PC-3 (cell line): ENCODE measurements at regions of chr14 and their contacts with region 1.

Region 1: DNA sequence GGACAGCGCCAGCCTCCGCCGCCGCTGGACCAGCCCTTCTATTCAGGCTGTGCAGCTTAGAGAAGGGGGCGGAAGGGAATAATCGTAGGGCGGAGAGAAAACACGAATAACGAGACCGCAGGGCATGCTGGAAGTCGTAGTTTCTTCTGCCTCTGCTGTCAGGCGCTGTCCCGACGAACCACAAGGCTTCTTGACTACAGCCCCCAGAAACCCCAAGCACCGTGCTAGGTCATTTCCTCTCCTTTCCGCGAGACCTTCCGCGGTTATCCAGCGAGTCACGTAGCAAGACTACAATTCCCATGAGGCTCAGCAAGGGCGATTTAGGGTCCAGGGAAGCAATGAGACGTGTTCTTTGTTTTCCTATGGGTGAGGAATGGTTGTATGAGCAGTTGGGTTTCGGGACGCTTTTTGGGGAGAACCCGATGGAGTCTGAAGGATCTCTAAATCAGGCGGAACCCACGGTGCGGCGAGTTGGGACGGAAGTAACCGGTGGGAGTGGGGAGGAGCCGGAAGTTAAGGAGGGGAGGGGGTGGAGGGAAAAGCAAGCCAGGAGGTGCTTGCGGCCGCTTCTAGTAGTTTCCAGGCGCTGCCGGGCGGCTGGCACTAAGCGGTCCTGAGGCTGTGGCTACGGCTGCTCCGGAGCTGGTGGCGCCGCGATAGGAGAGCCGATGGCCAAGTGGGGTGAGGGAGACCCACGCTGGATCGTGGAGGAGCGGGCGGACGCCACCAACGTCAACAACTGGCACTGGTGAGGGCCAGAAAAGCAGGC is at the starts of genes AHSA1 and VIPAS39:
- DNase-seq: peak; percentile 100
- ATAC-seq: peak; percentile 95
- H3K4me3 ChIP-seq: peak within 1 kb of the TSS; percentile 82
- H3K27ac ChIP-seq: peak within 1 kb of the TSS; percentile 50
- H3K4me1 ChIP-seq: peaks cover 19% of the 10 kb centered on the region
- H3K27me3 ChIP-seq: no peaks in the 10 kb centered on the region
- CTCF ChIP-seq: no peak
- total RNA-seq, gene AHSA1: 215 and 217 TPM in 2 replicates
- total RNA-seq, gene VIPAS39: 20.1 and 20.2 TPM in 2 replicates

Region 2: DNA sequence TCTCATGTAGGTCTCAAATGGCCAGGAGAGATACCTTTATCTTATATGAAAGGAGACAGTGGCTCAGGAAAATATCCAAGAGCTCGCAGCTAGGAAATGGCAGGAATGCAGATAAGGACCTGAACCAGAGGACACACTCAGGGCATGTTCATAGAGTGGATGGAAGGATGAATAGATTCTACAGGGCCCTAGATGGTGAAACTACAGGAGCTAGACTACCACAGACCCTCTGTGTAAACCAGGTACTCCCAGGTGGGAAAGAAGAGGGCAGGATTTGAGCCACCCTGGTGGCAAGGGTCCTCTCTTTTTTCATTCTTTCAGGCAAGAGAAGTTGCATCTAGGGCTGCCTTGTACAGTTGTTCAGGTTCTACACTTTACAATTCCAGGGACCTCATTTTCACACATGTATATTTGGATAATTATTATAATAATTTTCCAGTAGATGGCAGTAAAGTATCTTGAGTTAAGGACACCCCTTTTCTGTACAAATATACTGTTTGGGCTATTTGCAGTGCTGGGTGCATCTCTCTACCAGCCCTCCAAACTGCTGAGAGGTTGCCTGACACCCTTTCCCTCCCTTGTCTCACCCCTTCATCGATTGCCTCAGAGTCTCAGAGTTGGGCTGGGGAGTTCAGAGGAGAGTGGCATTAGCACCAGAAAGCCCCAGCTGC is 305.7 kb before region 1 on chr14:
- CTCF ChIA-PET with region 1: no interaction called
- POLR2A ChIA-PET with region 1: interaction called, 3 read pairs
- intact Hi-C with region 1: loop called (anchors 5 kb)
- DNase-seq: peak; percentile 82
- ATAC-seq: peak; percentile 79
- H3K4me3 ChIP-seq: no peak overlapping the region
- H3K27ac ChIP-seq: no peak overlapping the region
- H3K4me1 ChIP-seq: no peaks in the 10 kb centered on the region
- H3K27me3 ChIP-seq: peaks cover 8% of the 10 kb centered on the region
- CTCF ChIP-seq: peak; percentile 61

Region 3: DNA sequence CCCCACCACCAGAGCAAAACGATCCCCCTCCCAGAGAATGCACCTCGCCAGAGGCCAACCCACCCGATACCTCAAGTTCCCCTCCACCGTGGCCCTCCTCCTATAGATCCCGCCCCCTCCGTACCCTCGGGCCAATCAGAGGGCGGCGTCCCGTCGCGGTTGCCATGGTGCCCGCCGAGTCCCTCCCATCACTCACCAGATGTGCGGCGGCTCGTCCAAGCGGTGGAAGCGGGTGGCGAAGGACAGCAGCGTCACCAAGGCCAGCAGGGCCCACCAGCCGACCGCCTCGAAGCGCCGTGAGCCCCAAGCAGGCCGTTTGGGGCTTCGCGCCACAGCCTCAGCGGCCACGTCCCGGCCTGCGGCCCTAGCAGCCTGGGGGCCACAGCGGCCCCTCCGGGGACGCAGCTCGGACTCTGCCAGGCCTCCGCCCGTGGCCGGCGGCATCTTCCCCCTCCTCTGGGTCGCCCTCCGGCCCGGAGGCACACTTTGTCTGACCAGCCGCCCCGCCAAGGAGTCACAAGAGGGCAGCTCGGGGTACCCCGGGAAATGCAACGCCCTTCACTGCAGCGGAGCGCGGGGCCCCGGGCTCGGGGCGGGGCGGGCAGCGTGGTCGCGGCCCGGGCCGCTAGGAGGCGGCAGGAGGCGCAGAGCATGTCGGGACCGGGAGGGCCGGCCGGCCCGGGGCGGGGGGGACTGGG is 137.3 kb before region 1 on chr14 and contains the start of gene POMT2:
- CTCF ChIA-PET with region 1: interaction called, 3 read pairs
- POLR2A ChIA-PET with region 1: no interaction called
- intact Hi-C with region 1: loop called (anchors 1 kb)
- DNase-seq: peak; percentile 98
- ATAC-seq: peak; percentile 66
- H3K4me3 ChIP-seq: peak within 1 kb of the TSS; percentile 86
- H3K27ac ChIP-seq: peak within 1 kb of the TSS; percentile 88
- H3K4me1 ChIP-seq: peaks cover 42% of the 10 kb centered on the region
- H3K27me3 ChIP-seq: no peaks in the 10 kb centered on the region
- CTCF ChIP-seq: peak; percentile 52; the same call in 1 of the 2 replicates
- total RNA-seq, gene POMT2: 57.6 and 67.6 TPM in 2 replicates

Region 4: DNA sequence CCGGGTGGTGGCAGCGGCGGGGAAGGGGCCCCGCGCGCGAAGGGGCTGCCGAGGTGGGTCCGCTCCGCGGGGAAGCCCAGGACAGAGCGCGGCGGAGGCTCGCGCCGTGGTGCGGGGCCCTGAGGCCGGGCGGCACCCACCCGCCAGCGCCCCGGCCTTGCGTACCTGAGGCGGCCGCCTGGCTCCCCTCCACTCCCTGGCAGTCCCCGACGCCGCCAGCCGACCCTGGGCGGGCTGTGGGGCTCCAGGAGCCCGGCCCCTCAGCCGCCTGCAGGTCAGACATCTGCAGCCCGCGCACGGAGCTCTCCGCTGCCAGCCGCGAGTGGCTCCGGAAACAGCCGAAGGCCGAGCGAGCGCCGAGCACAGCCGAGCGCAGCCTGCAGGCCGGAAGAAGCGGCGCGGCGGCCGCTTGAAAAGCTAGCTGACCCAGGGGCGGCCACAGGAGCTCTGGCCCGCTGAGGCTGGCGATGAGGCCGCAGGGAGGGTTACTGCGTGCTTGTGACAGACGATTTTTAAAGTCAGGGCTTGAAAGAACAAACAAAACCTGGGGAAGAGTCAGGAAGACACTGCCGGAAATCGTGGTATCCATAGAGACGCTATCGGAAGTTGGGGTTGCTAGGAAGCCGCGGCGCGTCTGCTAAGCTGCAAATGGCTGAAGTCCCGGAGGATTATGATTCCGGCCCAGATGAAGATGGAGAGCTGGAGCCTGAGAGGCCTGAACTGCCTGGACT is 80.8 kb before region 1 on chr14 and contains the starts of genes SAMD15 and TMED8:
- CTCF ChIA-PET with region 1: interaction called, 3 read pairs
- POLR2A ChIA-PET with region 1: no interaction called
- intact Hi-C with region 1: loop called (anchors 1 kb)
- DNase-seq: peak; percentile 94
- ATAC-seq: peak; percentile 97
- H3K4me3 ChIP-seq: peak within 1 kb of the TSS; percentile 92
- H3K27ac ChIP-seq: peak within 1 kb of the TSS; percentile 51
- H3K4me1 ChIP-seq: peaks cover 27% of the 10 kb centered on the region
- H3K27me3 ChIP-seq: no peaks in the 10 kb centered on the region
- CTCF ChIP-seq: peak; percentile 37; the same call in 1 of the 2 replicates
- total RNA-seq, gene SAMD15: 1.2 and 6.2 TPM in 2 replicates
- total RNA-seq, gene TMED8: 16.8 and 17.8 TPM in 2 replicates

Region 5: GRCh38 chr14:77390188-77390587 is 67.5 kb before region 1 on chr14:
- CTCF ChIA-PET with region 1: no interaction called
- POLR2A ChIA-PET with region 1: no interaction called
- intact Hi-C with region 1: no loop called
- DNase-seq: no peak
- ATAC-seq: no peak
- H3K4me3 ChIP-seq: no peak overlapping the region
- H3K27ac ChIP-seq: no peak overlapping the region
- H3K4me1 ChIP-seq: no peaks in the 10 kb centered on the region
- H3K27me3 ChIP-seq: no peaks in the 10 kb centered on the region
- CTCF ChIP-seq: no peak

Region 6: DNA sequence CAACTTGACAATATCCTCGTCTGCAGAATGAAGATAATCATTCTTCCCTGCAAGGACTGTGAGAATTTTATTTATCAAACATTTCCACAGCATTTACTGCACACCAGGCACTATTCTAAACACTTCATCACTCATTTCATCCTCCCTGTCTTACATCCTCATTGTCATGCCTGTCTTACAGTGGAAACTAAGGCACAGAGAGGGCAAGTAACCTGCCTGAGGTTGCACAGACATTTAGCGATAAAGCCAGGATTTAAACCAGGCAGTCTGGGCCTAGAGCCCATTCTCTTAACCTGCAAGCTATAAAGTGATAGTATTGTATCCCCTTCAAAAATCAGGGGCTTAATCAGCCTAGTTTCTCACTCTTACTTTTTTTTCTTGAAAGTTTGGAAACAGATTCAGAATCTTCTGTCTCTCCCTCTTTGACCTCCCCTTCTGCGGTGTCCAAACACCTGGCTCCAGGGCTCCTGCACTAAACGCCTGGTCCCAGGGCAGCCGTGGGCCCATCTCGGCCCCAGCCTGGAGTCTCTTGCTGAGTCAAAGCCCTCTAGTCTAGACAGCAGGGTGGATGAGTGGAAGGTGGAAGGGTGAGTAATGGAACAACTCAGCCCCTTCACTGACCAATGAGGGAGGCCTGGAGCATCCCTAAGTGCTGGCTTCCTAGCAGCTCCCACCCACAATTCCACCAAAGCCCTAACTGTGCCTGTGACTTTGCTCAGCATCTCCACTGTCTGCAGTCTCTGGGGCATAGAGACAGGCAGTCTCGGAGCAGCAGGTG is 28.4 kb after region 1 on chr14:
- CTCF ChIA-PET with region 1: no interaction called
- POLR2A ChIA-PET with region 1: no interaction called
- intact Hi-C with region 1: no loop called
- DNase-seq: peak; percentile 46
- ATAC-seq: peak; percentile 65
- H3K4me3 ChIP-seq: no peak overlapping the region
- H3K27ac ChIP-seq: no peak overlapping the region
- H3K4me1 ChIP-seq: no peaks in the 10 kb centered on the region
- H3K27me3 ChIP-seq: no peaks in the 10 kb centered on the region
- CTCF ChIP-seq: no peak

Region 7: DNA sequence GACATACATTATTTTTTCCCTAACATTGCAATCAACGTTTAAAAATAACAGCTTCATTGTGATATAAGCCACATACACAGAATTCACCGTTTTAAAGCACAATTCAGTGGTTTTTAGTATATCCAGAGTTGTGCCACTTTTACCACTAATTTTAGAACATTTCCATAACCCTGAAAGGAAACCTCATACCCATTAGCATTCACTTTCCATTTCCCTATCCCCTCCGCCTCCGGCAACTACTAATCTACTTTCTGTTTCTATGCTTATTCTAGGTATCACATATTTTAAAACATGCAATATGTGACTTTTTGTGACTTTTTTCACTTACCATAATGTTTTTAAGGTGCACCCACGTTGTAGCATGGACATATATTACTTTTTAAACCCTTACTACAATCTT is 96.5 kb after region 1 on chr14:
- CTCF ChIA-PET with region 1: interaction called, 5 read pairs
- POLR2A ChIA-PET with region 1: no interaction called
- intact Hi-C with region 1: loop called (anchors 1 kb)
- DNase-seq: no peak
- ATAC-seq: no peak
- H3K4me3 ChIP-seq: no peak overlapping the region
- H3K27ac ChIP-seq: no peak overlapping the region
- H3K4me1 ChIP-seq: no peaks in the 10 kb centered on the region
- H3K27me3 ChIP-seq: no peaks in the 10 kb centered on the region
- CTCF ChIP-seq: no peak

Region 8: GRCh38 chr14:77616454-77617229 is 158.9 kb after region 1 on chr14 and contains the start of gene SPTLC2:
- CTCF ChIA-PET with region 1: no interaction called
- POLR2A ChIA-PET with region 1: no interaction called
- intact Hi-C with region 1: loop called (anchors 5 kb)
- DNase-seq: peak; percentile 99
- ATAC-seq: peak; percentile 94
- H3K4me3 ChIP-seq: peak within 1 kb of the TSS; percentile 97
- H3K27ac ChIP-seq: peak within 1 kb of the TSS; percentile 45
- H3K4me1 ChIP-seq: peaks cover 28% of the 10 kb centered on the region
- H3K27me3 ChIP-seq: no peaks in the 10 kb centered on the region
- CTCF ChIP-seq: peak; percentile 42; the same call in 1 of the 2 replicates
- total RNA-seq, gene SPTLC2: 25.6 and 27.6 TPM in 2 replicates

Region 9: GRCh38 chr14:77707724-77708408 is 250.2 kb after region 1 on chr14 and contains the starts of genes ALKBH1 and SLIRP:
- CTCF ChIA-PET with region 1: interaction called, 4 read pairs
- POLR2A ChIA-PET with region 1: no interaction called
- intact Hi-C with region 1: loop called (anchors 1 kb)
- DNase-seq: peak; percentile 91
- ATAC-seq: peak; percentile 96
- H3K4me3 ChIP-seq: peak within 1 kb of the TSS; percentile 95
- H3K27ac ChIP-seq: peak within 1 kb of the TSS; percentile 19; the same call in 1 of the 2 replicates
- H3K4me1 ChIP-seq: peaks cover 18% of the 10 kb centered on the region
- H3K27me3 ChIP-seq: no peaks in the 10 kb centered on the region
- CTCF ChIP-seq: no peak; the same call in 1 of the 2 replicates
- total RNA-seq, gene ALKBH1: 9.7 and 10.8 TPM in 2 replicates
- total RNA-seq, gene SLIRP: 904 and 934 TPM in 2 replicates